GM12878 (cell line): ENCODE measurements at regions of chr2 and their contacts with region 1.

Region 1: DNA sequence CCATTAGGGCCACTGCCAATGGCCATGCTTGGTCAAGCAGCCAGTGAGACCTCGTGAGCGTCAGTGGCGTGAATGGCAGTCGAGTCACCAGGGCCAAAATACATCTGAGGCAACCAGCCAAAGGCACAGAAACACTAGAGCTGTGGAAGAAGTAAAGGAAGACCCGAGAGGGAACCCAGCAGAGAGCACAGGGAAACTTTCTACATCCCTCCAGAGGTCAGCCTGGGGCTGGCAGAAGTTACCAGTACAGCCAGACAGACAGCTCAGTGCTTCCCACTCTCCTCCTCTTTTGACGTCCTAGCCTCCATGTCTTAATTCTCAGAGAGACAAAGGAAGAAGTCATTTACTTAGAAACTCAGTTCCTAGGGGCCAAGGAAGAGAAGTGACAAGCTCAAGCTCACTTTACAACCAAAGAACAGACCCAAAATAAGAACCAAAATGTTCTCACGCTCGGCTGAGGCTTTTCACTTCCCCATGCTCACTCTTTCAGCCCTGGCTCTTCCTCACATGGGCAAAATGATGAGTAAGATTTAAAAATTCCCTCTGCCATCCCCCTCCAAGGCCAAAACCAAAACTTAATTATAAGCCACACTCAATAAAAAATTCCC is 8.7 kb downstream of the CYRIA start:
- DNase-seq: peak; percentile 83
- ATAC-seq: peak; percentile 67
- H3K4me3 ChIP-seq: peak overlapping the region; percentile 3; the same call in 1 of the 2 replicates
- H3K27ac ChIP-seq: peak overlapping the region; percentile 68
- H3K4me1 ChIP-seq: peaks cover 48% of the 10 kb centered on the region
- H3K27me3 ChIP-seq: peaks cover 0 to 2% of the 10 kb centered on the region in 2 experiments; a peak in 2 of 4 replicates
- CTCF ChIP-seq: no peak
- EP300 ChIP-seq: peak; percentile 62 to 73; a peak in 3 of 4 replicates
- POLR2A ChIP-seq: no peak
- RAD21 ChIP-seq: no peak

Region 2: DNA sequence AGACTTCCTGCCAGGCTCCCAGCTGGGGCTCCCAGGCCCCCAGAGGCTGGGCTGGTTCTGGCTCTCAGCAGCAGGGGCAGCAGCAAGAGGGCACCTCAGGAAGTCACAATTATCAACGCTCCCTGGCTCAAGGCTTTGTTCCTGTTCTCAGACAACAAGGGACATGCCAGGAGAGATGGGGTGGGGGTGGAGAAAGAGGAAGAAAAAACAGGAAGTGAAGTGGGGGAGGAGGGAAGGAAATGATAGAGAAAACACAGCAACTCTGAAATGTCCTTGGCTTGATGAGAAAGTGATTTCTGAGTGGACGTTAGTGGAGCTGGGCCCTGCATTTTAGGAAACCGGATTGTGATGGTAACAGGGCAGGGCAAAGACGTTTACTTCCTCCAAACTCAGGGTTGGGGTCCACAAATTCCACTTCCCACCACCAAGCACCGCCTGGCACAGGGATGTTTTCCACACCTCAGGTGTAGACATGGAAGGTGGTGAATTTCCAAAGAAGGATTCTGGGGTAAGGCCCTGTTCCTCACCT is 31.6 kb before region 1 on chr2:
- CTCF ChIA-PET with region 1: interaction called, 73 read pairs
- POLR2A ChIA-PET with region 1: interaction called, 15 read pairs
- RAD21 ChIA-PET with region 1: interaction called, 185 read pairs
- SMC1A ChIA-PET with region 1: interaction called, 302 read pairs
- in situ Hi-C with region 1: no loop called
- intact Hi-C with region 1: loop called (anchors 2 kb)
- DNase-seq: no peak
- ATAC-seq: peak; percentile 43
- H3K4me3 ChIP-seq: no peak overlapping the region
- H3K27ac ChIP-seq: no peak overlapping the region
- H3K4me1 ChIP-seq: peaks cover 16% of the 10 kb centered on the region
- H3K27me3 ChIP-seq: peaks cover 0 to 11% of the 10 kb centered on the region in 2 experiments
- CTCF ChIP-seq: no peak
- EP300 ChIP-seq: no peak
- POLR2A ChIP-seq: no peak
- RAD21 ChIP-seq: no peak

Region 3: DNA sequence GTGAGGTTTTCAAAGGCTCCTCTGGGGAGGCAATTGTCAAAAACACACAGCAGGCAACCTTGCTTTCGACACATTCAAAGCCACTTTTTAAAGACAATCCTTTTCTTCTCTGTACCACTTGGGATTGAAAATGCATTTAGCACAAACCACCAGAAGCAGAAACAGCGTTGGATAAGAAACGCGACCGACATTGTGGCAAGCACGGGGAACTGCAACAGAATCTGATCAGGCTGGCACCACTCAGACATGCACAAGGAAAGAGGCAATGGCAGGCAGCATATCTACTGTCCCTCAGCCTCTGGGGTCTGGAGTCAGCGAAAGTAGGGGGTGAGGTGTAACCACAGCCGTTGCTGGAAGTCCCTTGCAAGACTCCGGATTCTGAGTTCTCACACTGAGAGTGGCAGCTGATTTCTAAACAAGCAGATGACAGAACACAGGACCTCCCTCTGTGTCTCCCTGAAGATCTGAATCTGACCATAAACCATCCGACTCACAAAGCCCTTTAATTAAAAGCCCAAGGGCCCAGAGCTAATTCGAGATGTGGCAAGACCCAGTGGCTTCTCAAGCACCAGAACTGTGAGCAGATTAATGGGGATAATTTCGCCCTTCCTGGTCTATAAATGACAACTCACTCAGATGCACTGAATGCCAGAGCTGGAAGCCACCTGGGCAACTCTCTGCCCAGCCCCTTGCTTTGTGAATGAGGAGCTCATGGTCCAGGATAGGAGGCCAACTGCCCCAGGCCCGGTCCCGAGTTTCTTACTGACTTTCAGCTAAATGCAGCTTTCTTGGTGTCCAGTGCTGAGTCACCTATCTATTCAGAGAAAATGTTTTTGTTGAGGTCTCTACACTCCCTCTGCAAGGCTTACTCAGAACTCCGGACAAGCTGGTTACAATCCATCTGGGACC is 20.8 kb before region 1 on chr2:
- CTCF ChIA-PET with region 1: interaction called, 73 read pairs
- POLR2A ChIA-PET with region 1: interaction called, 9 read pairs
- RAD21 ChIA-PET with region 1: interaction called, 185 read pairs
- SMC1A ChIA-PET with region 1: interaction called, 302 read pairs
- in situ Hi-C with region 1: no loop called
- intact Hi-C with region 1: no loop called
- DNase-seq: no peak
- ATAC-seq: peak; percentile 62
- H3K4me3 ChIP-seq: no peak overlapping the region
- H3K27ac ChIP-seq: no peak overlapping the region
- H3K4me1 ChIP-seq: no peaks in the 10 kb centered on the region
- H3K27me3 ChIP-seq: peaks cover 0 to 6% of the 10 kb centered on the region in 2 experiments; a peak in 1 of 4 replicates
- CTCF ChIP-seq: no peak
- EP300 ChIP-seq: no peak
- POLR2A ChIP-seq: no peak
- RAD21 ChIP-seq: no peak

Region 4: DNA sequence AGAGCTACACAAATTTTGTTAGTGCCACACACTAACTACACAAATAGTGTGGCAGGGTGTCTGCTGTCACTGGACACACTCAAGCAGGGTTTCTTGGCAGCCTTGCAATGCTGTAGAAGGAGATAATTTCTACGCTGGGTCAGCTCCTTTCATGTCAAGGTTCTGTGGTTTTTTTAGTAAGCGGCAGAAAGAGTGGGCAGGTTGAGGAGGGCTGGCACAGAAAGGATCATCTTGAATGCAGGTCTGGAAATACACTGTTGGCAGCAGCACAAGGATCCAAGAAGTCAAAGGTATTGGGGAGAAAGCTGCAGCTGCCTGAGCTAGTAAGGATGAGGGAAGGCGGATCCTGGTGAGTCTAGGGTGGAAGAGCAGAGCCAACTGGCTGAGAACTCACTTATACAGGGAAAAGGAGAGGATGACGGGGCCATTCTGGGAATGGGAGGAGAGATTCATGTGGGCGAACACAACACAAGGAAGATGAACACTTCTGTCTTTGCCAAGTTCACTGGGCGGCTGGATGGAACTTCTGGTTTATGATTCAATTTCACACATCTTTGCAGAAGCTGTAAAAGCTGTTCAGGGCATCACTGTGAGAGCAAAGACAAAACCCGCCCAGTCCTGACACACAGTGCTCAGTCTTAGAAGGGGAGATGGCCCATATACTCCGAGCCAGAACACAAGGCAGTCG is 25.7 kb after region 1 on chr2:
- CTCF ChIA-PET with region 1: interaction called, 11 read pairs
- POLR2A ChIA-PET with region 1: no interaction called
- RAD21 ChIA-PET with region 1: interaction called, 6 read pairs
- SMC1A ChIA-PET with region 1: interaction called, 13 read pairs
- in situ Hi-C with region 1: no loop called
- intact Hi-C with region 1: no loop called
- DNase-seq: no peak
- ATAC-seq: no peak
- H3K4me3 ChIP-seq: no peak overlapping the region
- H3K27ac ChIP-seq: no peak overlapping the region
- H3K4me1 ChIP-seq: no peaks in the 10 kb centered on the region
- H3K27me3 ChIP-seq: no peaks in the 10 kb centered on the region; a peak in 1 of 4 replicates
- CTCF ChIP-seq: no peak
- EP300 ChIP-seq: no peak
- POLR2A ChIP-seq: no peak
- RAD21 ChIP-seq: no peak

Region 5: DNA sequence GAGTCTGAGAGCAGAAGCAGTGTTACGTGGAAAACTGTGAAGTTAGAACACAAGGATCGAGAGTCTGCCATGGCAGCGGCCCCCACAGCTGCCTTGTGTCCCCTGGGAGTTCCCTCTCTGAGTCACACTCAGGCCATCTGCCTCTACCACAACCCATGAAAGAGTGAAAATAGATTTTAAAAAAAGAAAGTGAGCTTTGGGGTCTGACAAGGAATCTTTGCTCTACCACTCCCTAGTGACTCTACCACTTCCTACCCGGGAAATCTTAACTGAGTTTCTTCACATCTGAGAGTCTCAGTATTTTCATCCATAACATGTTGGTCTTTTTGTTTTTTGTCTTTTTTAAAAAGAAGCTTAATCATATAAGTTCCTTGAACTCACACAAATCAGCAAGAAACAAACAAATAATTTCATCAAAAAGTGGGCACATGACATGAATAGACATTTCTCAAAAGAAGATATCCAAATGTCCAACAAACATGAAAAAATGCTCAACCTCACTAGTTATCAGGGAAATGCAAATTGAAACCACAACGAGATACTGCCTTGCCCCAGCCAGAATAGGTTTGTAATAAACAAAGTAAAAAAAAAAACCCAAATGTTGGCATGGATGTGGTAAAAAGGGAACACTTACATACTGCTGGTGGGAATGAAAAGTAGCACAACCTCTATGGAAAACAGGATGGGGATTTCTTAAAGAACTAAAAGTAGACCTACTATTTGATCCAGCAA is 1157.0 kb after region 1 on chr2:
- CTCF ChIA-PET with region 1: no interaction called
- POLR2A ChIA-PET with region 1: no interaction called
- RAD21 ChIA-PET with region 1: no interaction called
- SMC1A ChIA-PET with region 1: interaction called, 3 read pairs
- in situ Hi-C with region 1: no loop called
- intact Hi-C with region 1: loop called (anchors 10 kb)
- DNase-seq: peak; percentile 82
- ATAC-seq: peak; percentile 86
- H3K4me3 ChIP-seq: 0 out of 2 replicates have a peak overlapping the region, but pooled peaks have one; percentile 11
- H3K27ac ChIP-seq: peak overlapping the region; percentile 81
- H3K4me1 ChIP-seq: peaks cover 36% of the 10 kb centered on the region
- H3K27me3 ChIP-seq: no peaks in the 10 kb centered on the region
- CTCF ChIP-seq: no peak
- EP300 ChIP-seq: peak; percentile 31 to 80; a peak in 3 of 4 replicates
- POLR2A ChIP-seq: no peak
- RAD21 ChIP-seq: 0 out of 2 replicates have a peak, but pooled peaks have one; percentile 3